ENCODE measurements at regions of chr3 and their contacts with region 1.

Region 1: GRCh38 chr3:5026331-5027218 is 47.3 kb downstream of the BHLHE40 start:
- DNase-seq: peak; percentile 33 to 87 (median 48)
- ATAC-seq: peak; percentile 75
- H3K4me3 ChIP-seq: peak overlapping the region; percentile 61
- H3K4me3 Mint-ChIP-seq: peak overlapping the region; percentile 86
- H3K27ac ChIP-seq: peak overlapping the region in 1 of 2 donors; percentile 44
- H3K27ac Mint-ChIP-seq: peak overlapping the region; percentile 75
- H3K4me1 ChIP-seq: peaks cover 16% of the 10 kb centered on the region
- H3K4me1 Mint-ChIP-seq: peaks cover 11% of the 10 kb centered on the region
- H3K27me3 ChIP-seq: no peaks in the 10 kb centered on the region
- H3K27me3 Mint-ChIP-seq: no peaks in the 10 kb centered on the region
- CTCF ChIP-seq: peak; percentile 68

Region 2: DNA sequence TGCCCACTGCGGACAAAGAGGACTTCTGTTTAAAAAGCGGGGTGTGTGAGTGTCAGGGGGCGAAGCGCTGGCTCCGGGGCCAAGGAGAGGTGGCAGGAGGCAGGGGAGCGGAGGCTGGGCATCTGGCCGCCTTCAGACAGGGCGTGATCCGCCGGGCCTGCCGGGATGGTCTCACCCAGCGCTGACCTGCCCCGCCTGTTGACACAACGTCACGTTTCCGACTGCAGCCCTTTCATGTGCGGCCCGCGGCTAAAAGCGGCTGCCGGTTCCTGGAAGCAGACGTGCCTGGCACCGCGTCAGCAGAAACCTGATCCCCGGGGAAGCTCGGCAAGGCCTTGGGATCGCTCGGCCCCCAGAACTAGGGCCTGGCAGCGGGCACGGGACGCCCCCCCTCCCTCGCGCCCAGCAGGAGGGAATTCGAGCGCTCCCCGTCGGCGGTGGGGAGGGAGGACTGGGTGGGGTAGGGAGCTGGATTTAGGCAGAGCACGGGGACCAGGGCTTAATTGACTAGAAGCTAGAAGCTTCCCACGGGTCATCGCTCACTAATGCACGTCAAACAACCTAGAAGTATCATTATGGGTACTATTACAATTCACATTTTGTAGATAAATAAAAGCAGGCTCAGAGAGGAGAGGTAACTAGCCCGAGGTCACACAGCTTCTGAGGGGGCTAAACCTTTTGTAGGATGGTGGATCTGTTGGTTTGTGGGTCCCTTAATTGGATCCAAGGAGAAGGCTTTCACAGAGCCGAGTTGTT is 39.6 kb before region 1 on chr3:
- CTCF ChIA-PET with region 1: interaction called, 7 read pairs
- POLR2A ChIA-PET with region 1: interaction called, 4 read pairs
- intact Hi-C with region 1: loop called in 1 of 2 experiments (anchors 2 kb)
- DNase-seq: peak; percentile 45 to 88 (median 58)
- ATAC-seq: peak; percentile 37
- H3K4me3 ChIP-seq: peak overlapping the region; percentile 67
- H3K4me3 Mint-ChIP-seq: peak overlapping the region; percentile 86
- H3K27ac ChIP-seq: peak overlapping the region; percentile 29 to 59
- H3K27ac Mint-ChIP-seq: peak overlapping the region; percentile 89
- H3K4me1 ChIP-seq: peaks cover 55% of the 10 kb centered on the region
- H3K4me1 Mint-ChIP-seq: peaks cover 45% of the 10 kb centered on the region
- H3K27me3 ChIP-seq: no peaks in the 10 kb centered on the region
- H3K27me3 Mint-ChIP-seq: no peaks in the 10 kb centered on the region
- CTCF ChIP-seq: no peak

Region 3: GRCh38 chr3:5063724-5064123 is 37.1 kb after region 1 on chr3:
- CTCF ChIA-PET with region 1: no interaction called
- POLR2A ChIA-PET with region 1: no interaction called
- intact Hi-C with region 1: no loop called
- DNase-seq: no peak
- ATAC-seq: no peak
- H3K4me3 ChIP-seq: no peak overlapping the region
- H3K4me3 Mint-ChIP-seq: no peak overlapping the region
- H3K27ac ChIP-seq: no peak overlapping the region
- H3K27ac Mint-ChIP-seq: no peak overlapping the region
- H3K4me1 ChIP-seq: no peaks in the 10 kb centered on the region
- H3K4me1 Mint-ChIP-seq: no peaks in the 10 kb centered on the region
- H3K27me3 ChIP-seq: no peaks in the 10 kb centered on the region
- H3K27me3 Mint-ChIP-seq: peaks cover 3% of the 10 kb centered on the region
- CTCF ChIP-seq: no peak

Region 4: DNA sequence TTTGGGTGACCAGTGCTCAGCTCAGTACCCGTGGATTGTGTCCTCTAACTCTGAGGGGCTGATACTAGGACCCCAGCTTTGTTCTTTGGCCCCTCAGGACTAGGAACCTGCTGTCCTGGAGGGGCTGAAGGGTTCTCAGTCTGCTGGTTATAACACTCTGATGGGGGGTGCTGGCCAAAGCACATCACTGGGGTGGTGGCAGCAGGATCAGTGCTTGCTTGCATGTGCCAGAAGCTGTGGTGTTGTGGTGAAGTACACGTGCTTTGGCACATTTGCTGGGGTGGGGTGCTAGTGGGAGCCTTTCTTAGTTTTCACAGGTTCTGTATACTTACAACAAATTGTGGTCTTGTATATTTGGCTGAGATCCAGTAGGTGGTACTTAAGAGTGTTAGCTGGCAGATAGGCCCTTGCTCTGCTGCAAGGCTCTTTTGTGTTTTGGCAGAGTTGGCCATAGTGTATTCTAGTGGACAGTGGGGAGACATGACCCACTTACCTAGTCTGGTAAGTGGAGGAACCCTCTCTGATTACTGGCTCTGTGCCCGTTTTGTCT is 505.2 kb after region 1 on chr3:
- CTCF ChIA-PET with region 1: no interaction called
- POLR2A ChIA-PET with region 1: no interaction called
- intact Hi-C with region 1: no loop called
- DNase-seq: no peak
- ATAC-seq: no peak
- H3K4me3 ChIP-seq: no peak overlapping the region
- H3K4me3 Mint-ChIP-seq: no peak overlapping the region
- H3K27ac ChIP-seq: no peak overlapping the region
- H3K27ac Mint-ChIP-seq: no peak overlapping the region
- H3K4me1 ChIP-seq: no peaks in the 10 kb centered on the region
- H3K4me1 Mint-ChIP-seq: no peaks in the 10 kb centered on the region
- H3K27me3 ChIP-seq: no peaks in the 10 kb centered on the region
- H3K27me3 Mint-ChIP-seq: peaks cover 12% of the 10 kb centered on the region
- CTCF ChIP-seq: no peak

Region 5: GRCh38 chr3:5616873-5617272 is 590.3 kb after region 1 on chr3:
- CTCF ChIA-PET with region 1: no interaction called
- POLR2A ChIA-PET with region 1: no interaction called
- intact Hi-C with region 1: no loop called
- DNase-seq: no peak
- ATAC-seq: no peak
- H3K4me3 ChIP-seq: no peak overlapping the region
- H3K4me3 Mint-ChIP-seq: no peak overlapping the region
- H3K27ac ChIP-seq: no peak overlapping the region
- H3K27ac Mint-ChIP-seq: no peak overlapping the region
- H3K4me1 ChIP-seq: no peaks in the 10 kb centered on the region
- H3K4me1 Mint-ChIP-seq: no peaks in the 10 kb centered on the region
- H3K27me3 ChIP-seq: no peaks in the 10 kb centered on the region
- H3K27me3 Mint-ChIP-seq: no peaks in the 10 kb centered on the region
- CTCF ChIP-seq: no peak